Activated CD4-positive, alpha-beta memory T cell treated with anti-CD3 and anti-CD28 coated beads for 36 hours (primary cell): ENCODE measurements at regions of chr12 and their contacts with region 1.

Region 1: GRCh38 chr12:101939856-101940265 is 62.5 kb downstream of the DRAM1 start:
- DNase-seq: peak; percentile 69
- H3K4me3 Mint-ChIP-seq: no peak overlapping the region
- H3K27ac Mint-ChIP-seq: no peak overlapping the region
- H3K4me1 Mint-ChIP-seq: peaks cover 16% of the 10 kb centered on the region
- H3K27me3 Mint-ChIP-seq: peaks cover 12% of the 10 kb centered on the region

Region 2: DNA sequence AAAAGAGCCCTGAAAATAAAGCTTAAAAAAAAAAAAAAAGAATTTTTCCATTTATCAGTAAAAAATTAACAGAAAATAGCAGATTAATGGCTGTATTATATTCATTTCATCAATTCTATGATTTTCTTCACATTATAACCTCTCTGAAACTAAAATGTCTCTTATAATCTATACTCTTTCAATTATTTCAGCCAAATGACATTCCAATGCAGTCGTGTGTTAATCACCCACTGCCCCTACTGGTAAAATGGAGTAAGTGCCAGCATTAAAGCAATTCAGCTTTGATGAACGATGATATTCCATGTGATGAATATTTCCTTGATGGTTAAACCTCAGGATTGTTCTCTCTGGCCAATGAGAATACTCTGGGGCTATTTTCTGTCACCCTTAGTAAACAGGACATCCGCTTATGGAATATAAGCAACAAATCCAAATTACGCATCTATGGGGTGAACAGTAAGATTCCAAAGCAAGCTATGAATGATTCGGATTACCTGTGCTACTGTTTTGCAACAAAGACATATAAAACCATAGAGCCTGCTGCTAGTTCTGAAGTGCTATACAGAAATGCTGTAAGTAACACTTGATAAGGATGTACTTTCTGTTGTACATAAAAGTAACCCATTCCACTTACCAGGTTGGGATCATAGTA is 180.3 kb before region 1 on chr12:
- CTCF ChIA-PET with region 1: no interaction called
- POLR2A ChIA-PET with region 1: no interaction called
- intact Hi-C with region 1: no loop called
- DNase-seq: no peak
- H3K4me3 Mint-ChIP-seq: no peak overlapping the region
- H3K27ac Mint-ChIP-seq: no peak overlapping the region
- H3K4me1 Mint-ChIP-seq: no peaks in the 10 kb centered on the region
- H3K27me3 Mint-ChIP-seq: no peaks in the 10 kb centered on the region

Region 3: DNA sequence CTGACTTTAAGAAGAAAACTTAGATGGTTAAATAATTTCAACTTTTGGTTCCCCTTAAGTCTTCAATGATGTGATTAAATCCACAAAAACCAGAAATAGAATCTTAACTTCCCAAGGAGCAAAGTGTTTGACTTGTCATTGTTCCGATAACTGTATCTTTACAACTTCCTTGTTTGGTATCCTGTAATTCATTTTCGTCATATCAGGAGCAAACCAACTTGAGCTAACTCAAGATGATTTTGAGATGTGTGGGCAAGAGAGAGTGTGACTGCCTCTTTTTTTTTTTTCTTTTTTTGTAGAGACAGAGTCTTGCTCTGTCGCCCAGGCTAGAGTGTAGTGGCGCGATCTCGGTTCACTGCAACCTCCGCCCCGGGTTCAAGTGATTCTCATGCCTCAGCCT is 37.2 kb before region 1 on chr12:
- CTCF ChIA-PET with region 1: no interaction called
- POLR2A ChIA-PET with region 1: no interaction called
- intact Hi-C with region 1: no loop called
- DNase-seq: no peak
- H3K4me3 Mint-ChIP-seq: no peak overlapping the region
- H3K27ac Mint-ChIP-seq: no peak overlapping the region
- H3K4me1 Mint-ChIP-seq: no peaks in the 10 kb centered on the region
- H3K27me3 Mint-ChIP-seq: no peaks in the 10 kb centered on the region

Region 4: DNA sequence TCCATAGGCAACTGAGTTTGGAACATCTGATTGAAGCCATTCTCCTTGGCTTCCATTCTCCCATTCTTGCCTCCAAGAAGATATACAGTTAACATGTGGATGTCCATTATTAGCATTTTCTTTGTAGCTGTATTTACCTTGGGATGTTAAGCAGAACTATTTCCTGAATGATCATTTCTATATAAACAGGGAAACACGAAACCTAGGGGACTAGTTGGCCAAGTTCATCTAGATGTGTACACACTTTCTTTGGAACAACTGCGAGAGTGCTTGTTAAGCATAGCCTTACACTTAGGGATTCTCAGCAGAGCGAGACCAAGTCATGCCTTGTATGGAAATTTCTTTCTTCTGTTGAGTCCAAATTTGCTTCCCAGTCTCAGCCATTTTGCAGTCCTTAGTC is 20.4 kb before region 1 on chr12:
- CTCF ChIA-PET with region 1: interaction called, 5 read pairs
- POLR2A ChIA-PET with region 1: no interaction called
- intact Hi-C with region 1: loop called (anchors 1 kb)
- DNase-seq: no peak
- H3K4me3 Mint-ChIP-seq: no peak overlapping the region
- H3K27ac Mint-ChIP-seq: no peak overlapping the region
- H3K4me1 Mint-ChIP-seq: peaks cover 6% of the 10 kb centered on the region
- H3K27me3 Mint-ChIP-seq: no peaks in the 10 kb centered on the region

Region 5: GRCh38 chr12:101951002-101951670 is 11.3 kb after region 1 on chr12:
- CTCF ChIA-PET with region 1: interaction called, 3 read pairs
- POLR2A ChIA-PET with region 1: no interaction called
- intact Hi-C with region 1: loop called (anchors 1 kb)
- DNase-seq: peak; percentile 32
- H3K4me3 Mint-ChIP-seq: no peak overlapping the region
- H3K27ac Mint-ChIP-seq: no peak overlapping the region
- H3K4me1 Mint-ChIP-seq: peaks cover 6% of the 10 kb centered on the region
- H3K27me3 Mint-ChIP-seq: peaks cover 3% of the 10 kb centered on the region

Region 6: DNA sequence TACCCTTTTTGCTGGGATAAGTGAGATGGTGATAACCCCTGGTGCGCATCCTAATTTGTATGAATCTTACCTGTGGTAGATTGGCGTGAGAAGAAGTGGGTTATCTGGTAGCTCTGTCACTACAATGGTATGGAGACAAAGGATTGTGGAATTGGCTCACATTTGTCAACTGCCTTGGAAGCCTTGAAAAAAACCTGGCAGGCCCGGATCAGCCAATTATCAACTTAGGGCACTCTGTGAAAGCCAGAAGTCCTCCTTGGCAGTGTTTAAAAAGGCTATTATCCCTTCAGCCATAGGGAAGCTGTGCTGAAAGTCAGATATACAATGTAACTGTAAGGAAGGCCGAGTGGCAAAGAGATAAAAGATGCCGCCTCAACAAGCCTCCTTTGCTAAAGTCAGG is 65.4 kb after region 1 on chr12:
- CTCF ChIA-PET with region 1: no interaction called
- POLR2A ChIA-PET with region 1: no interaction called
- intact Hi-C with region 1: no loop called
- DNase-seq: no peak
- H3K4me3 Mint-ChIP-seq: no peak overlapping the region
- H3K27ac Mint-ChIP-seq: no peak overlapping the region
- H3K4me1 Mint-ChIP-seq: no peaks in the 10 kb centered on the region
- H3K27me3 Mint-ChIP-seq: peaks cover 2% of the 10 kb centered on the region

Region 7: GRCh38 chr12:102119674-102120563 is 180.1 kb after region 1 on chr12 and contains the starts of genes NUP37 and PARPBP:
- CTCF ChIA-PET with region 1: interaction called, 3 read pairs
- POLR2A ChIA-PET with region 1: no interaction called
- intact Hi-C with region 1: loop called (anchors 2 kb)
- DNase-seq: peak; percentile 95
- H3K4me3 Mint-ChIP-seq: peak within 1 kb of the TSS; percentile 87
- H3K27ac Mint-ChIP-seq: peak within 1 kb of the TSS; percentile 82
- H3K4me1 Mint-ChIP-seq: peaks cover 19% of the 10 kb centered on the region
- H3K27me3 Mint-ChIP-seq: no peaks in the 10 kb centered on the region
- total RNA-seq, gene NUP37: 86.8 to 89.5 TPM
- total RNA-seq, gene PARPBP: 24.0 to 25.9 TPM

Region 8: DNA sequence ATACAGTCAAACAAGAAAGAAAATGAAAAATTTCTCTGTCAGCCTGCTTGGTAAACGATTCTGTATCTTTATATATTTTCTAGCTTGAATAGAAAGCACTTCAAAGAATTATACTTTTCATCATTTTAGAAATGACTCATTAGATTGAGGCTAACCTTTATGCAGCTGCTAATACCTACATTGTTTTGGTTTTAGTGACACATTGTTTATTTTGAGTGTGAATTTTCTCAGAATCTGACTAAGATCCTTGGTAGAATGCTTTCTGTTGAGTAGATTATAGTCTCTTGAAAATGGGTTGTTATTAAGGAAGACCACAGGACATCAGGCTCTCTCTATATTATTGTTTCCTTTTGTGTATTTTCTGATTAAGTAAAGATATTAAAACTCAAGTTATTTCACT is 257.9 kb after region 1 on chr12 and contains the start of gene PMCH:
- CTCF ChIA-PET with region 1: interaction called, 3 read pairs
- POLR2A ChIA-PET with region 1: no interaction called
- intact Hi-C with region 1: loop called (anchors 10 kb)
- DNase-seq: no peak
- H3K4me3 Mint-ChIP-seq: no peak within 1 kb of the TSS
- H3K27ac Mint-ChIP-seq: no peak within 1 kb of the TSS
- H3K4me1 Mint-ChIP-seq: peaks cover 8% of the 10 kb centered on the region
- H3K27me3 Mint-ChIP-seq: no peaks in the 10 kb centered on the region
- total RNA-seq, gene PMCH: 0.59 TPM in 1 of 2 experiments, not detected in the other

Region 9: GRCh38 chr12:102300824-102301461 is 361.1 kb after region 1 on chr12:
- CTCF ChIA-PET with region 1: no interaction called
- POLR2A ChIA-PET with region 1: no interaction called
- intact Hi-C with region 1: no loop called
- DNase-seq: peak; percentile 16
- H3K4me3 Mint-ChIP-seq: no peak overlapping the region
- H3K27ac Mint-ChIP-seq: no peak overlapping the region
- H3K4me1 Mint-ChIP-seq: no peaks in the 10 kb centered on the region
- H3K27me3 Mint-ChIP-seq: peaks cover 2% of the 10 kb centered on the region

Region 10: DNA sequence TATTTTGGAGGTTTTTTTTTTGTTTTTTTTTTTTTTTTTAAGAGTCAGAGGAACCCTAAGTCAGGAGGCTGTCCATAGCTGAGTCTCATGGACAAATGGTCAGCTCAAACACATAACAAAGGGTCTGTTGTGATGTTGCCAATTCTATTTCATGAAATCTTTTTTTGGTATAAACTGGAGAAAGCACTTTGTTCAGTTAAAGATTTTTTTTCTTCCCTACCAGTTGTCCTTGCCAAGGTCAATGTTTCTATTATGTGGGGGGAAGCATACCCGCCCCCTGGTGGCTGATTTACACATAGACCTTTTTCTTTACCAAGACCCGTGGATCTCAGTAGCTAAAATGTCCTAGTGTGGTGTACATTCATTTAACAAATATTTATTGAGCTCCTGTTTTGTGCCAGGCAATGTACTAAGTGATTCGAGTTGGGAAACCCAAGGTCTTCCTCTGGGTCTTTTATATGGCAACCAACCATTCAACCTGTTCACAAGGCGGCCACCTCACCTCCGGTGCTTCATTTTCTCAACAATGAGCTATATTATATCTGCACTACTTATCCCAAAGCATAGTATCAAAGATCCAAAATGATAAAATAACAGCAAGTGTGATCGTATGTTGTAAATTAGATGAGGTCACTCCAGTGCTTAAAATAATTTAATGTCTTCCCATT is 762.7 kb after region 1 on chr12:
- CTCF ChIA-PET with region 1: no interaction called
- POLR2A ChIA-PET with region 1: no interaction called
- intact Hi-C with region 1: loop called (anchors 2 kb)
- DNase-seq: peak; percentile 15
- H3K4me3 Mint-ChIP-seq: no peak overlapping the region
- H3K27ac Mint-ChIP-seq: no peak overlapping the region
- H3K4me1 Mint-ChIP-seq: no peaks in the 10 kb centered on the region
- H3K27me3 Mint-ChIP-seq: no peaks in the 10 kb centered on the region

Region 11: DNA sequence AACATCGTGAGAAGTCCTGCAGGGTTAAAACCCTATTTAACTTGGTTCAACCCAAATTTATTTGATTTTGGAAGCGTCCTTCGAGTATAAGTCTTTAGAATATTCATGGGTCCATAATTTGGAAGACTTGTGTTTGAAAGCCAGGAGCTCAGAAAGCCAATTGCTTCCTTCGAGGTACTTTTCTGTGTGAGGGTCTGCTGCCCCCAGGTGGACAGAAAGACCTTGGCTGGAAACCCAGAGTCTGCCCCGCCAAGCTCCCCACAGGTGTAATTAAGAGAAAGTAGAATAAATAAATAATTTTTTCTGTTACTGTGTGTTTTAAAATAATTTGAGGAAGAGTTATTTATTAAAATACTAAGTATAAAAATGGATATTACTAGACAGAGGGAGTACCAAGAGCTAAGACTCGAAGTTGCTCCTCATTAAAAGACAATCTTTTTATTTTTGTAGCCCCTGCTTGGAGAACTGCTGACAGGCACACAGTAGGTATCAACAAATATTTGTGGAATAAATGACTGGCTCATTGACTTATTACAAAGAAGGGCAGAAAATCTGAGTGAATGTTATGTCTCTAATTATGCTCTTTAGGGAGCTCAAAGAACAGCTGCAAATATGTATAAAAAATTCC is 871.4 kb after region 1 on chr12:
- CTCF ChIA-PET with region 1: interaction called, 4 read pairs
- POLR2A ChIA-PET with region 1: no interaction called
- intact Hi-C with region 1: loop called (anchors 2 kb)
- DNase-seq: peak; percentile 30
- H3K4me3 Mint-ChIP-seq: no peak overlapping the region
- H3K27ac Mint-ChIP-seq: no peak overlapping the region
- H3K4me1 Mint-ChIP-seq: no peaks in the 10 kb centered on the region
- H3K27me3 Mint-ChIP-seq: peaks cover 1% of the 10 kb centered on the region